Naive thymus-derived CD4-positive, alpha-beta T cell (primary cell): ENCODE measurements at regions of chr1 and their contacts with region 1.

Region 1: DNA sequence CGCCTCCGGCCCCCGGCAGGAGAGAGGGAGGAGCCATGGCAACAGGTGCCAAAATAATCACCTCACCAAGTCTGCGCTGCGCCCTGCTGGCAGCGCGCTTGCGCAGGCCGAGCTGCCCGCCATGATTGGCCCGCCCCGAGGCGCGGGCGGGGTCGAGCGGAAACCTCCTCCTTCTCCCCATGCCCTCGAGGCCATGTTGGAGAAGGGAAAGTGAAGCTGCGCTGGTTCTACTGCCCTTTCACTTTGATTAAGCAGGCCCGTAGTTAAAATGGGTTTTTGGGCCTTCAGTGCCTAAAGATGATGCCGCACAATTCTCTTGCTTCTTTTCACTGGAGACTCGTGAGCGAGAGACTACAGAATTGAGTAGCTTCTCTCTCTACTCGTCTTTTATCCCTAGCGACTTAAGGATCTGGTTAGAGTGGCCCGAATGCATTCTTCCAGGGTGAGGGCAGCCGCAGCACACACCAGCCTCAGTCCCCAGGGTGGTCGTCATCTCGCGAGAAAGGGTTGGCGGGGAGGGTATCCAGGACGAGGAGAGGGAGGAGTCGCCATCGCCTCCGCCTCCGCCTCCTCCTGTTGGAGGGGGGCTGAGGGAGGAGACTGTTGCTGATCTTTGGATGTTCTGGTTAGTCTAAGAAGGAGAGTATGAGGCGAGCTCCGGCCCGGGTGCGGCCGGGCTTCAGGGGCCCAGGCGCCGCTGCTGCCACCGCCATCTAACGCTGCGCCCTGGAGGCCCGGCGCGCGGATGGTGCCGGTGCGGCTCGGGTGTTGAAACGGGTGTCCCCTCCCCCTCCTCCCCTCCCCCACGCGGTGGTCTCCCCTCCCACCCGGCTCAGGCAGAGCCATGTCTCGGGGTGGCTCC is at the start of gene DCAF6:
- DNase-seq: peak; percentile 94 to 99 (median 99)
- ATAC-seq: peak; percentile 89
- H3K4me3 ChIP-seq: peak within 1 kb of the TSS; percentile 89
- H3K4me3 Mint-ChIP-seq: peak within 1 kb of the TSS; percentile 90 to 99 (median 96)
- H3K27ac ChIP-seq: peak within 1 kb of the TSS; percentile 89
- H3K27ac Mint-ChIP-seq: peak within 1 kb of the TSS; percentile 90 to 100 (median 99)
- H3K4me1 ChIP-seq: peaks cover 18 to 31% of the 10 kb centered on the region in 2 donors
- H3K4me1 Mint-ChIP-seq: peaks cover 29 to 58% (median 40%) of the 10 kb centered on the region in 7 donors
- H3K27me3 ChIP-seq: no peaks in the 10 kb centered on the region
- H3K27me3 Mint-ChIP-seq: no peaks in the 10 kb centered on the region
- total RNA-seq, gene DCAF6: 27.4 to 32.7 (median 29.1) TPM

Region 2: DNA sequence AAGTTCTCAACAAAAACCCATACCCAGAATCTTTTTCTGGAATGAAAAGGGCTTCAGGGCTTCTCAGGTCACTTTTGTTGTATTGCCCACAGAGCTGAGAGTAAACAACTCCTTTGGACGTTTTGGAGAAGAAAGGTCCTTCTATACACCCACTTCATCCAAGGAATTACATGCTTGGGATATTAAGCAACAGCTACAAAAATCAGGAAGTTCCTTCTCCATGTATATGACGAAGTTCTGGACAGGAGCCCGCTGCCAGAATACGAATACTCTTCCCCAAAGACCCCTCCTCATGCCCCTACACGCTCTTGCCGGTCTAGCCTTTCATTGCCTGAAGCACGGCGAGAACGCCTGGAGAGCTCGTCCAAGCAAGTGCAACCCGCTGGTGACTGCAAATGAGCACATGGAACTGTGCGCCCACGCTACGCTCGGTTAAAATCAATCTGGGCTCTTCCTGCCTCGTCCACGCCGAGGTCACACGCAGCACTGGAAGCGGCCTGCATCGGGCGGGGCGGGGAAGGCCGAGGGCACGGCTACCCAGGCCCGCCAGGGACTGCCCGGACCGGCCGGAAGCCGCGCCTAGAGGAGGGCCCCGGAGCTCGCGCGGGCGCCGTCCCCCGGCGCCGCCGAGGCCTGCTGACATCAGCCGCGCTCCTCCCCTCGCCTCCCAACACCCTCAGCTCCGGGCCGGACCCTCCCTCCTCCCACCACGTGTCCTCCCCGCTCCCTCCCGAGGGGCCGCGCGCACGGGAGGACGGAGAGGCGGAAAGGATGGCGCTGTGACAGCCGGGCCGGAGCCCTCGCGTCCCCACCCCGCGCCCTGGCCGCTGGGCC is 1097.3 kb before region 1 on chr1 and contains the start of gene POGK:
- CTCF ChIA-PET with region 1: no interaction called
- POLR2A ChIA-PET with region 1: interaction called, 3 read pairs
- intact Hi-C with region 1: loop called in 1 of 2 experiments (anchors 10 kb)
- DNase-seq: peak; percentile 70 to 89 (median 77)
- ATAC-seq: peak; percentile 95
- H3K4me3 ChIP-seq: peak within 1 kb of the TSS; percentile 60
- H3K4me3 Mint-ChIP-seq: peak within 1 kb of the TSS; percentile 89 to 97 (median 92)
- H3K27ac ChIP-seq: peak within 1 kb of the TSS; percentile 90
- H3K27ac Mint-ChIP-seq: peak within 1 kb of the TSS; percentile 91 to 100 (median 94)
- H3K4me1 ChIP-seq: peaks cover 13 to 21% of the 10 kb centered on the region in 2 donors
- H3K4me1 Mint-ChIP-seq: peaks cover 23 to 55% (median 48%) of the 10 kb centered on the region in 7 donors
- H3K27me3 ChIP-seq: no peaks in the 10 kb centered on the region
- H3K27me3 Mint-ChIP-seq: no peaks in the 10 kb centered on the region
- total RNA-seq, gene POGK: 24.7 to 38.7 (median 36.9) TPM

Region 3: DNA sequence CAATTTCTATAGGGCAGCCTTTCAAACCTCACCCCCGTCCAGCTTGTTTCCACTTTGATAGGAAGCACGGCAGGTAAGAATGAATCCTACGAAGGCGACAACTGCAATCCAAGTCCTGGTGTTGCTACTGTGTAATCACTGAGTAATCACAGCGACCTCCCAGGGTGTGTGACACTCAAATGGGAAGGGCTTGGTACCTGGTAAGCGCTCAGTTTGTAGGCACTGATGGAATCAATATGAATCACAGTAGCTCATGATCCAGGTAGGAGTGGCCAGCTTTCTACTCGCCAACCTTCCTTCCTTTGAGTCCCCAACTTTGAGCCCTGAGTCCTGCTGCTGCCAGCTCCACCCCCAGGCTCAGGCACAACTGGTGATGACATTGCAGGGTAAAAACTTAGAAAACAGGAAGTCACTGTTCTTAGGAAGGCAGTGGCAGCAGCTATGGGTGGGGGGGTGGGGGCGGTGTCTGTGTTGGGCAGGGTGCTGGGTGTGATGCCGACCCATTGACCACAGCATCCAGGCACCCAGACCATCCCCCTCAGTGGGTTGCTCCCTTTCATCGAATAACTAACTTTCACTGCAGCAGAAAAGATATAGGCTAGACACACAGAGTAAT is 488.7 kb before region 1 on chr1:
- CTCF ChIA-PET with region 1: no interaction called
- POLR2A ChIA-PET with region 1: no interaction called
- intact Hi-C with region 1: loop called in 1 of 2 experiments (anchors 5 kb)
- DNase-seq: peak; percentile 42 to 91 (median 83)
- ATAC-seq: peak; percentile 88
- H3K4me3 ChIP-seq: peak overlapping the region; percentile 38
- H3K4me3 Mint-ChIP-seq: peak overlapping the region; percentile 72 to 90 (median 82)
- H3K27ac ChIP-seq: peak overlapping the region; percentile 89
- H3K27ac Mint-ChIP-seq: peak overlapping the region; percentile 90 to 99 (median 97)
- H3K4me1 ChIP-seq: peaks cover 71 to 83% of the 10 kb centered on the region in 2 donors
- H3K4me1 Mint-ChIP-seq: peaks cover 56 to 97% (median 82%) of the 10 kb centered on the region in 7 donors
- H3K27me3 ChIP-seq: no peaks in the 10 kb centered on the region
- H3K27me3 Mint-ChIP-seq: no peaks in the 10 kb centered on the region

Region 4: DNA sequence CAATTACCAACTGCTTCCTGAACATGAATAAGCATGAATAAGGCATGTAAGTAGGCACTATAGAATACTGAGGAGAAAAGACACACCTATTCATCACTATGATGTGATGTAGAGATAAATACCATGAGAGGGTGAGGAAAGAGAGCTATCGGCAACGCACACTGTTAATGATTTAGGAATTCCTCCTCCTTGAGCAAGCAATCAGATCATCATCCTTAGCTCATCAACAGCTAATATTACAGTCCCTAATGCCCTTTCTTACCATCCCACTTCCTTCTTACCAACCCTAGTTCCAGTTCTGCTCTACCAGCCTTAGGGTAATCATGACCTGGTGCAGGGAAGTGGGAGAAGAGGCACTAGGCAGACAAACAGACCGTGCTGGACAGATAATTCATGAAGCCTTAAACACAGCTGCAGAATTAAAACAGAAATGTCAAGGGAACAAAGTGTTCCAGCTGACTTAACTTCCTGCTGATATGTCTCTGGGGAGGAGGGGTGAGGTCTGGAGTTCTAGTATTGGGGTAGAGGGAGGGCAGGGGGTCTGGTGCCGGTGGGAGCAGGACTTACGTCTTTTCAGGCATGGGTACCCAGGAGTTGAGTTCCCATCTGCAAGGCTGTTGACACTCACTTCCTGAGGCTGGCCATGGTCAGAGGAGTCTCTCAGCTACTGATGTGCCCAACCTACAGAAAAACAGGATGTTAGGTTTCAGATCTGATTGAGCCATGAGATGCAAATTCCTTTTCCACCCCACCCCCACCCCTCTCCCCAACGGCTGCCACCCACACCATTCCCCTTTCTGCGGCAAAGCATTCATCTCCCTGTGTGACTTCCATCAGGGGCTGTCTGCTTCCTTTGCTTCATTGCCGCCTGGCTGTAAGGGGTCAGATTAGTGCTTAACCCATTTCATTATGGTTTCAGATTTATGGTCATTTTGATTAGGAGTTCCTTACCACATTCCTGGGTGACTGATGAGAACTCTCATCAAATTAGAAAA is 318.8 kb before region 1 on chr1:
- CTCF ChIA-PET with region 1: no interaction called
- POLR2A ChIA-PET with region 1: no interaction called
- intact Hi-C with region 1: no loop called
- DNase-seq: peak in 3 of 9 donors; percentile 22 to 28 (median 22)
- ATAC-seq: peak; percentile 85
- H3K4me3 ChIP-seq: peak overlapping the region; percentile 14
- H3K4me3 Mint-ChIP-seq: peak overlapping the region; percentile 73 to 96 (median 78)
- H3K27ac ChIP-seq: peak overlapping the region; percentile 66
- H3K27ac Mint-ChIP-seq: peak overlapping the region; percentile 83 to 96 (median 90)
- H3K4me1 ChIP-seq: peaks cover 16 to 35% of the 10 kb centered on the region in 2 donors
- H3K4me1 Mint-ChIP-seq: peaks cover 47 to 83% (median 69%) of the 10 kb centered on the region in 7 donors
- H3K27me3 ChIP-seq: no peaks in the 10 kb centered on the region
- H3K27me3 Mint-ChIP-seq: no peaks in the 10 kb centered on the region

Region 5: DNA sequence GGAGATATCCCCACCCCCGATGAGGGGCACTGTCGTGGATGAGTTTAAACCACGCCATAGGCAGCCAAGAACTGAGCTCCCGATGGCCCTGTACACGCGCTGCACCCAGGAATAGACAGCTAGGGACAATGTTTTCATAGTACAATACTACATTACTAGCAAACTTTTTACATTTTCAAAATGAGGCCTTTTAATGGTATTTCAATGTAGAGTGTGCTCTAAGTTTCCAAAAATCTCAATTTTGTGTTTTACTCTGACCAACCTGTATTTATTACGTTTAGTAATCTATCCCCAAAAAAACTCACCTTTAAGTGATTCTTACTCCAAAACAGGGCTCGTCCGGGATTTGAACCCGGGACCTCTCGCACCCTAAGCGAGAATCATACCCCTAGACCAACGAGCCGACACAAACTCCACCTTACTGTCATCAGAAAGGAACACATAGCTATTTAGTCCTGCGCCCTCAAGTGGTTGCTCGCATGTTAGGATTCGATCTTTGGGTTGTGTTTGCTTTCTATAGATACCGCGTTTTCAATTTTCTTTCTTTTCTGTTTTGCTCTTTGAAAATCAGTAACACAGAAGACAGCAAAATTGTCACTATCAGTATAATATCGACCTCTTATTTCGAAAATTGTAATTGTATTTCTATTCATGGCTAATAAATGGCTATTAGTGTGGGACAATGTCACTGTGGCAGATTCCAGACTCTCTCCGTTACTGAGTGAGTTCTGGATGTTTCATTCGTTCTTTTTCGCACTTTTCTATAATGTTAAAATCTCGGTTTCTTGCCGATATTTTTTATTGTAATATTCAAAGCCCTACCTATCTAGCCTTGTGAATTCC is 220.9 kb before region 1 on chr1:
- CTCF ChIA-PET with region 1: interaction called, 3 read pairs
- POLR2A ChIA-PET with region 1: interaction called, 10 read pairs
- intact Hi-C with region 1: loop called (anchors 1 kb)
- DNase-seq: peak; percentile 66 to 91 (median 89)
- ATAC-seq: peak; percentile 81
- H3K4me3 ChIP-seq: peak overlapping the region; percentile 88
- H3K4me3 Mint-ChIP-seq: peak overlapping the region; percentile 89 to 98 (median 93)
- H3K27ac ChIP-seq: peak overlapping the region; percentile 48
- H3K27ac Mint-ChIP-seq: peak overlapping the region; percentile 87 to 100 (median 98)
- H3K4me1 ChIP-seq: peaks cover 4 to 13% of the 10 kb centered on the region in 2 donors
- H3K4me1 Mint-ChIP-seq: peaks cover 26 to 53% (median 45%) of the 10 kb centered on the region in 7 donors
- H3K27me3 ChIP-seq: no peaks in the 10 kb centered on the region
- H3K27me3 Mint-ChIP-seq: peaks cover 0 to 16% (median 0%) of the 10 kb centered on the region in 5 donors

Region 6: GRCh38 chr1:167947733-167948132 is 11.4 kb after region 1 on chr1:
- CTCF ChIA-PET with region 1: interaction called, 3 read pairs
- POLR2A ChIA-PET with region 1: interaction called, 8 read pairs
- intact Hi-C with region 1: loop called in 1 of 2 experiments (anchors 1 kb)
- DNase-seq: no peak
- ATAC-seq: no peak
- H3K4me3 ChIP-seq: no peak overlapping the region
- H3K4me3 Mint-ChIP-seq: peak overlapping the region in 5 of 10 donors; percentile 3 to 40 (median 10)
- H3K27ac ChIP-seq: no peak overlapping the region
- H3K27ac Mint-ChIP-seq: peak overlapping the region in 1 of 9 donors; percentile 29
- H3K4me1 ChIP-seq: peaks cover 0 to 8% of the 10 kb centered on the region in 2 donors
- H3K4me1 Mint-ChIP-seq: peaks cover 32 to 65% (median 51%) of the 10 kb centered on the region in 7 donors
- H3K27me3 ChIP-seq: no peaks in the 10 kb centered on the region
- H3K27me3 Mint-ChIP-seq: no peaks in the 10 kb centered on the region

Region 7: GRCh38 chr1:168082008-168082876 is 145.9 kb after region 1 on chr1:
- CTCF ChIA-PET with region 1: interaction called, 6 read pairs
- POLR2A ChIA-PET with region 1: no interaction called
- intact Hi-C with region 1: loop called (anchors 1 to 5 kb)
- DNase-seq: peak in 8 of 9 donors; percentile 29 to 66 (median 48)
- ATAC-seq: peak; percentile 83
- H3K4me3 ChIP-seq: no peak overlapping the region
- H3K4me3 Mint-ChIP-seq: no peak overlapping the region
- H3K27ac ChIP-seq: no peak overlapping the region
- H3K27ac Mint-ChIP-seq: peak overlapping the region in 1 of 9 donors; percentile 54
- H3K4me1 ChIP-seq: no peaks in the 10 kb centered on the region
- H3K4me1 Mint-ChIP-seq: peaks cover 0 to 12% (median 0%) of the 10 kb centered on the region in 7 donors
- H3K27me3 ChIP-seq: no peaks in the 10 kb centered on the region
- H3K27me3 Mint-ChIP-seq: no peaks in the 10 kb centered on the region

Region 8: DNA sequence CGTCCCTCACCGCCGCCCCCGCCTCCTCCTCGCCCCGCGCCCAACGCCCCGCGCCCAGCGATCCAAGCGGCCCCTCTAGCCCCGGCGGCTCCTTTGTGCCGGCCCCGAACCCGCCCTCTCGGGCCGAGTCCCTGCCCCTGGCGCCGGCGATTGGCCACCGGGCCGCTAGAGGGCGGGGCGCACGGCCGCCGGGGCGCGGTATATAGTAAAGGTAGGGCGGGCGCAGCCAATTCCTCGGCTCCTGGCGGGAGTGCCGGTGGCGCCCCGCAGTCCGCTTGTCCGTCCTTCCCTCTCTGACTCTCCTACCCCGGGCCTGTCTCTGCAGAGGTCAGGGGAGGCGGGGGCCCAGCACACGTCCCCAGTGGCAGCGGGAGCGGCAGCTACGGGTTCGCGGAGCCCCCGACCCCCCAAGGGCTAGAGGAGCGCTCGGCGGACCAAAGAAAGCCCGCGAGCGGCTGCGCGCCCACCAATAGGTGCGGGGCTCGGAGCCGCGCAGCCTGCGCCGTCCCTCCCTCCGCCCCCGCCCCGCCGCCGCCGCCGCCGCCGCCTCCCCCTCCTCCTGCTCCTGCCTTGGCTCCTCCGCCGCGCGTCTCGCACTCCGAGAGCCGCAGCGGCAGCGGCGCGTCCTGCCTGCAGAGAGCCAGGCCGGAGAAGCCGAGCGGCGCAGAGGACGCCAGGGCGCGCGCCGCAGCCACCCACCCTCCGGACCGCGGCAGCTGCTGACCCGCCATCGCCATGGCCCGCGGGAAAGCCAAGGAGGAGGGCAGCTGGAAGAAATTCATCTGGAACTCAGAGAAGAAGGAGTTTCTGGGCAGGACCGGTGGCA is 1170.0 kb after region 1 on chr1 and contains the start of gene ATP1B1:
- CTCF ChIA-PET with region 1: no interaction called
- POLR2A ChIA-PET with region 1: no interaction called
- intact Hi-C with region 1: loop called in 1 of 2 experiments (anchors 10 kb)
- DNase-seq: peak; percentile 66 to 90 (median 76)
- ATAC-seq: peak; percentile 95
- H3K4me3 ChIP-seq: peak within 1 kb of the TSS; percentile 67
- H3K4me3 Mint-ChIP-seq: peak within 1 kb of the TSS; percentile 81 to 93 (median 88)
- H3K27ac ChIP-seq: peak within 1 kb of the TSS; percentile 58
- H3K27ac Mint-ChIP-seq: peak within 1 kb of the TSS in 8 of 9 donors; percentile 29 to 85 (median 56)
- H3K4me1 ChIP-seq: peaks cover 7 to 21% of the 10 kb centered on the region in 2 donors
- H3K4me1 Mint-ChIP-seq: peaks cover 24 to 48% (median 40%) of the 10 kb centered on the region in 7 donors
- H3K27me3 ChIP-seq: no peaks in the 10 kb centered on the region
- H3K27me3 Mint-ChIP-seq: peaks cover 0 to 19% (median 0%) of the 10 kb centered on the region in 5 donors
- total RNA-seq, gene ATP1B1: 1.8 to 10.6 (median 2.3) TPM